Right lobe of liver (tissue), 6 donors: ENCODE measurements at regions of chr6 and their contacts with region 1.

Region 1: DNA sequence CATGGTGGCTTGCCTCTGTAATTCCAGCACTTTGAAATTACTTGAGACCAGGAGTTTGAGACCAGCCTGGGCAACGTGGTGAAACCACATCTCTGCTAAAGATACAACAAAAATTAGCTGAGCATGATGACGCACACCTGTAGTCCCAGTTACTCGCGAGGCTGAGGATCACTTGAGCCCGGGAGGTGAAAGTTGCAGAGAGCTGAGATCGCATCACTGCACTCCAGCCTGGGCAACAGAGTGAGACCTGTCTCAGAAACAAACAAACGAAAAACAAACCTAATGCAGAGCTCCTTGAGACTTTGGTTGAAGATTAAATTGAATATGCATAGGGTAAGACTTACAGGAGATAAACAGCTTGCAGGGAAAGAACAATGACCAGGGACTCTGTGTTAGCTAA is 80.8 kb downstream of the SCAF8 start:
- DNase-seq: no peak
- ATAC-seq: no peak
- H3K4me3 ChIP-seq: no peak overlapping the region
- H3K27ac ChIP-seq: no peak overlapping the region
- H3K4me1 ChIP-seq: no peaks in the 10 kb centered on the region
- H3K27me3 ChIP-seq: no peaks in the 10 kb centered on the region
- CTCF ChIP-seq: no peak
- POLR2A ChIP-seq: no peak

Region 2: DNA sequence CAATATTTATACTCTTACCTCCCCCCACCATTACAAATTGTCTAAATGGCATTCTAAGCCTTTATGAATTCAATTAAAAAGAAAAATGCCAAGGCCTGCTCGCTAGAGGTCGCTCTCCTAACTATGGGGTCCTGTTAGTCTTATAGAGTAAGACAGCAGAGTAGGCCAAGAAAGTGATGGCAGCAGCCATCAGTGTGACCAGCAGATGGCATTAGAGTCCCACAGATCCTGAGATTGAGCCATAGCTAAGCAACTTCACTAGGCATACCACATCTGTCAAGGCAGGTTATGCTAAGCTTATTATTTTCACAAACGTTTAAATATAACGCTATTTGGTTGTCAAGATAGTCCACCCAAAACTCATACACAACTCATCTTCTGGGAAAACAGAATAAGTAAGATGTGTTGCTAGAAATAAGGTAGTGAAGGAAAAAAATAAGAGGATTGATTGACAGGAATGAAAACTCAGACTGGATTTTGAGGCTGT is 138.4 kb before region 1 on chr6:
- intact Hi-C with region 1: loop called in 1 of 2 experiments (anchors 10 kb)
- DNase-seq: peak; percentile 74 to 87 (median 77)
- ATAC-seq: peak; percentile 100
- H3K4me3 ChIP-seq: no peak overlapping the region
- H3K27ac ChIP-seq: no peak overlapping the region
- H3K4me1 ChIP-seq: no peaks in the 10 kb centered on the region
- H3K27me3 ChIP-seq: no peaks in the 10 kb centered on the region
- CTCF ChIP-seq: peak; percentile 99 to 100 (median 100)
- POLR2A ChIP-seq: no peak